T47D (cell line): ENCODE measurements at regions of chr3 and their contacts with region 1.

Region 1: GRCh38 chr3:187679638-187680396 is 9.6 kb upstream of the SST start:
- DNase-seq: peak; percentile 77 to 82

Region 2: DNA sequence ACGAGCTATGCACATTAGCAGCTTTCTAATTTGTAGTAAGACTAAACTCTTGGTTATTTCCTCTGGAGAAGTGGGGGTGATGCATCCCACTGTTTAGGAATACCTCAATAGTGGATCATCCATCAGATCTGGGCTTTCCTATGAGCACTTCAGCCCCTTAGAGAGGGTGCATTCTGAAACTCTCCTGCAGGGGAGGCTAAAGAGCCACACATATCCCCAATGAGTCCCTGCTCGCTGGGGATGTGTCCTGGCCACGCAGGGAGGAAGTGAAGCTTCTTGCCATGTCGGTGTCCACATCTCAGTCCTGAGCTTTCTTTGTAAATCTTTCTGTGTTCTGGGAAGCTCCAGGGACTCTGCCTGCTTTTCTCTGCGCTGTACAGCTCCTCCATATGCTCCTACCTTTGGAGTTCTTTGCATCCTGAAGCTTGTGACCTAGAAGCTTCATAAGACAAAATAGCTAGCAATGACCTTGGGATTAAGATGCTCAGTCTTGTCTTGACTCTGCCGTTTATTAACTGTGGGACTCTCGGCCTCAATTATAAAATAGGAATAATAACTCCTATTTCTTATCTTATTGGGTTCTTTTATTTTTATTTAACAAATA is 360.0 kb before region 1 on chr3:
- in situ Hi-C with region 1: loop called (anchors 25 kb)
- DNase-seq: peak; percentile 35 to 82

Region 3: DNA sequence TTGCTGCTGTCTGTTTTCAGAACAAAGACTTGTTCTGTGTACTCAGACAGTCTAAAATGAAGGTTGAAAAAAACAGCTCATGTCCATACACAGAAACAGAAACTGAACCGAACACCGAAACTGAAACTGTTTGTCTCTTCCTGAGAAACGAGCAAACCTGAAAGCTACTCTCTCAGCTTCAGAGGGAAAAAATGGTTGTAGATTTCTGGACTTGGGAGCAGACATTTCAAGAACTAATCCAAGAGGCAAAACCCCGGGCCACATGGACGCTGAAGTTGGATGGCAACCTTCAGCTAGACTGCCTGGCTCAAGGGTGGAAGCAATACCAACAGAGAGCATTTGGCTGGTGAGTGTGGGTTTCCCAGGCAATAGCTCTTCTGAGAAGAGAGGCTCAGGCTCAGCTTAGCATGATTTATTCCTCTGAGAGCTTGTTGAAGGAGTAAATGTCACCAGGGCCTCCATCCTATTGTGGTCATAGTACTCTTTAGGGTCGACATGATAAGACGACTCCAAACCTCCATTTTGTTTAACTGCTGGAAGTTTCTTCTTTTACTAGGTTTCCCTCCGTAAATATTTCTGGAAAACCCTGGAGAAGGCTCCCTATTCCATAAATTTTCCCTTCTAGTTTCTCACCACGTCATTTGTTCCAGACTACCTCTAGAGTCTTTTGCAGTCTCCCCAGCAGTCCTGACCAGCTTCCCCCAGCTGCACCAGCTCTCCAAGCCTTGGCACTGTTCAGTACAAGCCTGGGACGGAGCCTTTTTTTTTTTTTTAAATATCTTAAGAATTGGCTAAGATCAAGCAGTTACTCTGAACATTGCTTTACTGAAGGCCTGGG is 311.3 kb before region 1 on chr3 and contains the start of gene RTP4:
- in situ Hi-C with region 1: no loop called
- DNase-seq: peak; percentile 21 to 46

Region 4: GRCh38 chr3:187870360-187871203 is 190.8 kb after region 1 on chr3:
- in situ Hi-C with region 1: no loop called
- DNase-seq: no peak